HCT116 (cell line): ENCODE measurements at regions of chr17 and their contacts with region 1.

Region 1: DNA sequence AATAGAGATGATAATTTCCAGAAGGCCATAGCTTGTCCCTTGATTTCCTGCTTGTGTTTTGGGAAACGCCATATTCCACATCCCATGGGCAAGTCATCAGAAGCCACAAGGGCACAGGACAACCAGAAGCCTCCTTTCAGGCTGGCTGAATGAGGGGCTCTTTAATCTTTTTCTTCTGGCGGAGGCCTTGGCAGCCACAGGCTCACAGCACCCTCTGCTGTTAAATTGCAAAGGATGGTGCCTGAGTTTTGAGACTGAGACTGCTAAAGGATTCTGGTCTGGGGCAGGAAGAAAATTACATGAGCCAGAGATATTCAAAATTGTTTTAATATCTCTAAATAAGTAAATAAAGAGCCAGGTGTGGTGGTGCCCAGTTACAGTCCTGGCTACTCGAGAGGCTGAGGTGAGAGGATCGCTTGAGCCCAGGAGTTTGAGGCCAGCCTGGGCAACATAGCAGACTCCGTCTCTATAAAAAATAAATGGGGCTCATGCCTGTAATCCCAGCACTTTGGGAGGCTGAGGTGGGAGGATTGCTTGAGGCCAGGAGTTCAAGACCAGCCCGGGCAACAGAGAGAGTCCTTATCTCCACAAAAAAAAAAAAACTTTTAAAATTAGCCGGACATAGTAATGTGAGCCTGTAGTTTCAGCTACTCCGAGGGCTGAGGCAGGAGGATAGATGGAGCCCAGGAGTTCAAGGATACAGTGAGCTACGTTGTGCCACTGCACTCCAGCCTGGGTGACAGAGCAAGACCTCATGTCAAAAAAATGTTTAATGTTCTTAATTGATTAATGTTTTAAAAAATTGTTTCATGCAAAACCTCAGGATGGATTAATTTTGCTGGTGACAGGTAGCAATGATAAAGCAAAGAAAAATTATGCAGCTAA is 26.3 kb downstream of the AARSD1 start:
- DNase-seq: peak; percentile 51
- ATAC-seq: peak; percentile 89
- H3K4me3 ChIP-seq: no peak overlapping the region
- H3K27ac ChIP-seq: no peak overlapping the region
- H3K4me1 ChIP-seq: no peaks in the 10 kb centered on the region; a peak in 1 of 4 replicates
- H3K27me3 ChIP-seq: no peaks in the 10 kb centered on the region; the same call in 1 of the 2 replicates
- CTCF ChIP-seq: peak; percentile 69 to 87 (median 76)
- POLR2A ChIP-seq: no peak
- RAD21 ChIP-seq: peak; percentile 93

Region 2: GRCh38 chr17:42720996-42721583 is 216.9 kb before region 1 on chr17:
- CTCF ChIA-PET with region 1: no interaction called
- POLR2A ChIA-PET with region 1: no interaction called
- RAD21 ChIA-PET with region 1: no interaction called
- intact Hi-C with region 1: loop called (anchors 1 kb)
- DNase-seq: peak; percentile 46
- ATAC-seq: peak; percentile 88
- H3K4me3 ChIP-seq: no peak overlapping the region
- H3K27ac ChIP-seq: no peak overlapping the region
- H3K4me1 ChIP-seq: no peaks in the 10 kb centered on the region
- H3K27me3 ChIP-seq: no peaks in the 10 kb centered on the region
- CTCF ChIP-seq: peak; percentile 56 to 85 (median 72)
- POLR2A ChIP-seq: no peak
- RAD21 ChIP-seq: peak; percentile 78

Region 3: GRCh38 chr17:42773290-42774035 is 164.5 kb before region 1 on chr17 and contains the start of gene VPS25:
- CTCF ChIA-PET with region 1: no interaction called
- POLR2A ChIA-PET with region 1: no interaction called
- RAD21 ChIA-PET with region 1: no interaction called
- intact Hi-C with region 1: no loop called
- DNase-seq: peak; percentile 75
- ATAC-seq: peak; percentile 94
- H3K4me3 ChIP-seq: peak within 1 kb of the TSS; percentile 85 to 99
- H3K27ac ChIP-seq: peak within 1 kb of the TSS; percentile 65
- H3K4me1 ChIP-seq: peaks cover 8 to 12% of the 10 kb centered on the region in 2 experiments; a peak in 2 of 4 replicates
- H3K27me3 ChIP-seq: no peaks in the 10 kb centered on the region
- CTCF ChIP-seq: peak in 1 of 3 experiments; percentile 18; a peak in 1 of 6 replicates
- POLR2A ChIP-seq: peak; percentile 92
- RAD21 ChIP-seq: no peak
- total RNA-seq, gene VPS25: 57.0 TPM

Region 4: DNA sequence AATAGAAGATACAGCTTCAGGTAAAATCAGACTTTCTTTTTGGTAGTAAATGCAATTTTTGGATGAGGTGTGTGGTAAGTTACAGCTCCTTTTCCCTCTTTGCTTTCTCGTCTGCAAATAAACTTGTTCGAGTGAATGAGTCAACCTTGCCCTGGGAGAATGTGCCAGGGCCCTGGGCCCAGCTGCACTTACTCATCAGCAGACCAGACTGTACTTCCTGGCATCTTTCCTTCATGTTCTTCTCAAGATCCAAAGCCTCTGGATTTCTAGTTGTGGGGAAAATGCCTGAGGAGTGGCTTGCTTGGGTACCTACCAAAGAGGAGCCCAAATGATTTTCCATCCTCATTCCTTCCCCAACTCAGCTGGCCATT is 42.8 kb before region 1 on chr17:
- CTCF ChIA-PET with region 1: no interaction called
- POLR2A ChIA-PET with region 1: no interaction called
- RAD21 ChIA-PET with region 1: no interaction called
- intact Hi-C with region 1: no loop called
- DNase-seq: peak; percentile 8
- ATAC-seq: peak; percentile 63
- H3K4me3 ChIP-seq: no peak overlapping the region
- H3K27ac ChIP-seq: no peak overlapping the region
- H3K4me1 ChIP-seq: peaks cover 0 to 11% of the 10 kb centered on the region in 2 experiments; a peak in 2 of 4 replicates
- H3K27me3 ChIP-seq: peaks cover 4% of the 10 kb centered on the region; the same call in 1 of the 2 replicates
- CTCF ChIP-seq: no peak
- POLR2A ChIP-seq: no peak
- RAD21 ChIP-seq: no peak